OCI-LY7 (cell line): ENCODE measurements at regions of chr10 and their contacts with region 1.

Region 1: DNA sequence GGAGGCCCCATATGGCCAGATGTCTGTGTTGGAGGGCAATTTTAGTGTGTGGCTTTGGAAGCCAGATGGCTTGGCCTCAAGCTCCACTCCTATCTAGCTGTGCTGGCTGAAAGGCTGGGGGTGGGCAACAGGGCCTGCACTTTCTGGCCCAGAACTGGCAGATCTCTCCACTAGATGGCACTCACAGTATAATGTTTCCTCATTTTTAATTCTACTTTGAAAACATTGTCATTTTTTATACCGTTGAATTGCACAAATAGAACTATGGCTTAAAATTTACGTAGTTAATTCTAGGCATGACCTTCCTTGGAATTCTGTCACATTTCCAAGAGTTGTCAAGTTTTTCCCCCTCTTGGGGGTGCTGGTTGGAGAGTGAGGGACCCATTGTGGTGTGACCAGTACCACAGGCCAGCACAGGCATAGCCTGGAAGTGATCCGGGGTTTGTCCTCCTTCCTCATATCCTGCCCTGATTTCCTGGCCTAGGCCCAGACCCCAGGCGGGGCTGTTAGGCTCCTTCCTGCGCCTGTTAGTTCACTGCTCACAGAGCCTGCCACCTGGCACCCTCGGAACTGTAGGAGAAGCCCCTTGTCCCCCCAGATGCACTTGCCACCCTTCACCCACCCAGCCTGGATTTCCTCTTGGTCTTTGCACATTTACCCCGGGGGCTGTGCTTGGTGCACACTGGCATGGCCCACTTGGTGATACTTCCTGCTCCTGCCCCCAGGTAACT is 52.8 kb downstream of the ARHGAP22 start:
- DNase-seq: peak; percentile 79
- H3K4me3 ChIP-seq: no peak overlapping the region
- H3K27ac ChIP-seq: no peak overlapping the region
- H3K4me1 ChIP-seq: peaks cover 18% of the 10 kb centered on the region
- CTCF ChIP-seq: peak; percentile 99

Region 2: GRCh38 chr10:48363617-48364355 is 188.2 kb before region 1 on chr10:
- CTCF ChIA-PET with region 1: no interaction called
- POLR2A ChIA-PET with region 1: no interaction called
- intact Hi-C with region 1: loop called (anchors 2 kb)
- DNase-seq: peak; percentile 55
- H3K4me3 ChIP-seq: no peak overlapping the region
- H3K27ac ChIP-seq: no peak overlapping the region
- H3K4me1 ChIP-seq: no peaks in the 10 kb centered on the region
- CTCF ChIP-seq: peak; percentile 90

Region 3: DNA sequence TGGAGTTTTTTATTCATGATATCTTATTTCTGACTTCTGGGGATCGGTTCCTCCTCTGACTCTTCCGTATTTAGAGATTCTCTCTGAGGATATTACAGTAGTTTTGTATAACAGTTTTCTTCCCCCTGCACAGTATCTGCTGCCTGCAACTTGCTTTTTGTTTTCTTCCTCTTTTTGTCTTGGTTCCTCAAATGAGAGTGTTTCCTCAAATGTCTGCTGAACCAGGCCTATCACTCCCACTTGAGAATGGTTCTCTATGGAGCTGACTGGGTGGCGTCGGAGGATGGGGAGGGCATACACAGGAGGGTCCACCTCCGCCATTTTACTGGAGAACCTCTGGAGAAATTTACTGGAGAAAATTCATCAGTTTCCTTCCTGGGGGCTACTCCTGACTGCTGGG is 25.1 kb after region 1 on chr10:
- CTCF ChIA-PET with region 1: interaction called, 3 read pairs
- POLR2A ChIA-PET with region 1: interaction called, 12 read pairs
- intact Hi-C with region 1: no loop called
- DNase-seq: peak; percentile 84
- H3K4me3 ChIP-seq: peak overlapping the region; percentile 21
- H3K27ac ChIP-seq: peak overlapping the region; percentile 95
- H3K4me1 ChIP-seq: peaks cover 92% of the 10 kb centered on the region
- CTCF ChIP-seq: no peak

Region 4: DNA sequence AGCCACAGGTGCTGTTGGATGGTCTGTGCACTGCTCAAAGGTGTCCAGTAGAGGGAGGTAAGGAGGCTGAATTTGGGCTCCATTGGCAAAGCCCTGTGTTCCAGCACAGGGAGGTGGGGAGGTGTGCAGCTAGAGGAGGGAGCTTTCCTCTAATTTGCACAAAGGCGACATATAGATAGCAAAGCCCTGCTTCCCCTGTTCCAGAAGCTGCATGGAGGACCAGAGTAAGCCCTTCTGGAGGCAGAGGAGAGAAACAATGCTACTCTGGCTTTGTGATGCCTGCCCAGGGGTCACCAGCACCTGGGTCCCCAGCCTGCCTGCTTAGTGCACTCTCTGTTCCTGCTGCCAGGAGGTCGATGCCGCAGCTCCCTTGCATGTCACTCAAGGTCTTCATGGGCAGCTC is 56.3 kb after region 1 on chr10:
- CTCF ChIA-PET with region 1: interaction called, 3 read pairs
- POLR2A ChIA-PET with region 1: interaction called, 3 read pairs
- intact Hi-C with region 1: loop called (anchors 1 kb)
- DNase-seq: peak; percentile 76
- H3K4me3 ChIP-seq: no peak overlapping the region
- H3K27ac ChIP-seq: no peak overlapping the region
- H3K4me1 ChIP-seq: peaks cover 9% of the 10 kb centered on the region
- CTCF ChIP-seq: peak; percentile 86

Region 5: DNA sequence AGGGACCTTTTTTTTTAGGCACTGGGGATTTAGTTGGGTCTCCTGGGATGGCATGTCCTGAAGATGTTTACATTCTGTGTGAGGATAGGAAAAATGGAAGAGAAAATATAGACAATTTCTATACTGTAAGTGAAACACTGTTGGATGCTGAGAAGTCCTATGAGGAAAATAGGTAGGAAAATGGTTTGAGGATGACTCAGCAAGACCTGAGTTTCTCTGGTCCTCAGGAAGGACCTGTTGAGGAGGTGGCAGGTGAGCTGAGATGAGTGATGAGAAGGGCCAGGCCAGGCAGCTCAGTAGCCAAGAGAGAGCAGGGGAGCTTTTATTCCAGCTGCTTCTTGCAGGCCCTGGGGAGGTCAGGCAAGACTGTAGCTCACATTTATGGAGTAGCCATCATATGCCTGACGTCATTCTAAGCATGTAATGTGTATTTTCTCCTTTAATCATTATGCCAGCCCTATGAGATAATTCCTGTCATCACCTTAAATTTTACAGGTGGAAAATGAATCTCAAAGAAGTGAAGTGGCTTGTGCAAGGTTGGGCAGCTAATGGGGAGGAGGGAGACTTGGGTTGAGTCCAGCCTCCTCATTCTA is 406.7 kb after region 1 on chr10:
- CTCF ChIA-PET with region 1: no interaction called
- POLR2A ChIA-PET with region 1: no interaction called
- intact Hi-C with region 1: loop called (anchors 10 kb)
- DNase-seq: no peak
- H3K4me3 ChIP-seq: no peak overlapping the region
- H3K27ac ChIP-seq: no peak overlapping the region
- H3K4me1 ChIP-seq: no peaks in the 10 kb centered on the region
- CTCF ChIP-seq: no peak